WTC11 (cell line): ENCODE measurements at regions of chrX and their contacts with region 1.

Region 1: DNA sequence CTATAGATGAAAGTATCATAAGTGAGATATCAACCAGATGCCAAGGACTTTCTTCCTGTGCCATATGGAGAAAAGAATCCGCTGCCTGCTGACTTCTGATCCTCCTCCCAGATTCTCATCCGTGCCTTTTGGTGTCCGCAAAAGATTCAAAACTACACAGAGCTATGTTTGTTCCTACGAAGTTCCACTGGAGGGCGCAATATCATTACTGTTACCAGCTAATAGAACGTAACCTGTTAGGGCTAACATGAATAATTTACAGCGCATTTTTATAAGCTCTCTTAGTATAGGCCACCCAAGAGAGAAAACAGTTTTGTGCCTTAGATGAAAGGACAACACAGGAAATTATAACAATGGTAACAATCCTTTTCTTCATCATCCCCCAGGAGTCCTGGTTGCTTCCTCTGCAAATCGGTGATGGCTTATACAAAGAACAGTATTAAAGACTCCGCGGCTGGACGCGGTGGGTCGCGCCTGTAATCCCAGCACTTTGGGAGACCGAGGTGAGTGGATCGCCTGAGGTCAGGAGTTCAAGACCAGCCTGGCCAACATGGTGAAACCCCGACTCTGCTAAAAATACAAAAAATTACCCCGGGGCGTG is 22.8 kb upstream of the CENPVL3 start:
- DNase-seq: peak; percentile 12
- ATAC-seq: peak; percentile 74
- H3K4me3 Mint-ChIP-seq: no peak overlapping the region
- H3K27ac Mint-ChIP-seq: no peak overlapping the region
- H3K4me1 Mint-ChIP-seq: no peaks in the 10 kb centered on the region
- H3K27me3 Mint-ChIP-seq: peaks cover 7% of the 10 kb centered on the region; the same call in 1 of the 2 replicates
- CTCF ChIP-seq: peak; percentile 34; the same call in 1 of the 2 replicates

Region 2: GRCh38 chrX:51272638-51273037 is 368.9 kb before region 1 on chrX:
- CTCF ChIA-PET with region 1: no interaction called
- POLR2A ChIA-PET with region 1: no interaction called
- DNase-seq: no peak
- ATAC-seq: no peak
- H3K4me3 Mint-ChIP-seq: no peak overlapping the region
- H3K27ac Mint-ChIP-seq: no peak overlapping the region
- H3K4me1 Mint-ChIP-seq: no peaks in the 10 kb centered on the region
- H3K27me3 Mint-ChIP-seq: no peaks in the 10 kb centered on the region
- CTCF ChIP-seq: no peak

Region 3: DNA sequence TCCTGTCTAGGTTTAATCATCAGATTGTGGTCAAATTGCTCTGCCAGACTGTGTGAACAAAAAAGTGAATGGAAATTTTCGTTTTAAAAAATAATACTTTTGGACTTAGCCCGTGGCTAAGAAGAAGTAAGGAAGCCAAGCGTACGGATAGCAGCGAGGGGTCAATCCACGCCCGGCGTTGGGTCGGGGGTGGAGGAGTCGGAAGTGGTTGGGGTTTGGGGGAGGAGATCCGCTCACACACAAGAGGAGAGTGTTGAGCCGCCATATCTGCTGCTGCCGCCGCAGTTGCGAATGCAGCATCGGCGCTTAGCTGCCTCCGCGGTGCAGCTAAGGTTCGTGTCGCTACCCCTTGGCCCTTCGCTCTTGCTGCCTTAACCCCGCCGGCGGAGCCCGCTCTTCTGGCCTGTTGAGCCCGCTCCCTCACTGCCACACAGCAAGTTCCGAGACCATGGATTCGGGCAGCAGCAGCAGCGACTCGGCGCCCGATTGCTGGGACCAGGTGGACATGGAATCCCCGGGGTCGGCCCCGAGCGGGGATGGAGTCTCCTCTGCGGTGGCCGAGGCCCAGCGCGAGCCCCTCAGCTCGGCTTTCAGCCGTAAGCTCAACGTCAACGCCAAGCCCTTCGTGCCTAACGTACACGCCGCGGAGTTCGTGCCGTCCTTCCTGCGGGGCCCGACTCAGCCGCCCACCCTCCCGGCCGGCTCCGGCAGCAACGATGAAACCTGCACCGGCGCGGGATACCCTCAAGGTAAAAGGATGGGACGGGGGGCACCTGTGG is 101.8 kb after region 1 on chrX and contains the start of gene GSPT2:
- CTCF ChIA-PET with region 1: no interaction called
- POLR2A ChIA-PET with region 1: no interaction called
- DNase-seq: peak; percentile 43
- ATAC-seq: peak; percentile 78
- H3K4me3 Mint-ChIP-seq: peak within 1 kb of the TSS; percentile 97
- H3K27ac Mint-ChIP-seq: peak within 1 kb of the TSS; percentile 88
- H3K4me1 Mint-ChIP-seq: peaks cover 37% of the 10 kb centered on the region
- H3K27me3 Mint-ChIP-seq: no peaks in the 10 kb centered on the region
- CTCF ChIP-seq: no peak
- total RNA-seq, gene GSPT2: 25.9 to 32.1 TPM (median 31.4 TPM) in 3 replicates

Region 4: DNA sequence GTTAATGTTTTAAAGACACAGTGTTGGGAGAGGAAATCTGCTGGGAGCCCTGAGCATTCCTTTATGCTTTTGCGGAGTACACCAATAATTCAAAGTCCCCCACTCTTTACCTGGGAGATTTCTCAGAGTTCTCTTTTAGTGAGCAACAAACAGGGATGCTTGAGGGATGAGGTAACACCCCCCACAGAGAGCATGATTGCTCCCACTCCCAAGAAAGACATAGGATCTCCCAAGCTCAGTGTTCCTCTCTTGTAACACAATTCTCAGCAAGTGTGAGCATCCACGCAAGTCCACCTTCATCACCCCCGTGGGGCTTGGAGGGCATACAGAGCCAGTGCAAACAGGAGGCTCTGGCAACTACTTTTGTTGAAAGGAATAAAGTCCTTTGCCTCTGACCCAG is 137.8 kb after region 1 on chrX:
- CTCF ChIA-PET with region 1: no interaction called
- POLR2A ChIA-PET with region 1: no interaction called
- DNase-seq: no peak
- ATAC-seq: no peak
- H3K4me3 Mint-ChIP-seq: no peak overlapping the region
- H3K27ac Mint-ChIP-seq: no peak overlapping the region
- H3K4me1 Mint-ChIP-seq: peaks cover 36% of the 10 kb centered on the region
- H3K27me3 Mint-ChIP-seq: no peaks in the 10 kb centered on the region
- CTCF ChIP-seq: no peak

Region 5: DNA sequence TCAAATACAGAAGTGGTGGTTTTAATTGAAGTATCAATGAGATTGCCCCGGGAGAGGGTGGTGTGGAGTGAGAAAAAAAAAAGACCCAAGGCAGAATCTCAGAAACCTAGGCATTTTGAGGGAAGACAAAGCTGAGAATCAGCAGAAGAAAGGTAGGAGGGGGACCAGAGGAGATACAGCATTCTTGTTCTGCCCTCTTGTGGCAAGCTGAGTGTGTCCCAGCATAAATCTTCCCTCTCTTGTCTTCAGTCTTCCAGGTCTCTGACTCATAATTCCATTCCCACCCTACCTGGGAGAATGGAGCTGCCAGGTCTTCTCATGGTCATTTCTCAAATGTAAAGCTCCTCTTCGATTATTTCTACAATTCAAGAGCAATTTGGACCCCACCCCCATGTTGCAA is 219.2 kb after region 1 on chrX:
- CTCF ChIA-PET with region 1: interaction called, 49 read pairs
- POLR2A ChIA-PET with region 1: no interaction called
- DNase-seq: peak; percentile 13
- ATAC-seq: peak; percentile 79
- H3K4me3 Mint-ChIP-seq: no peak overlapping the region
- H3K27ac Mint-ChIP-seq: peak overlapping the region; percentile 80
- H3K4me1 Mint-ChIP-seq: peaks cover 18% of the 10 kb centered on the region
- H3K27me3 Mint-ChIP-seq: no peaks in the 10 kb centered on the region
- CTCF ChIP-seq: peak; percentile 20; the same call in 1 of the 2 replicates

Region 6: GRCh38 chrX:51892921-51893745 is 251.6 kb after region 1 on chrX and contains the start of gene MAGED1:
- CTCF ChIA-PET with region 1: interaction called, 10 read pairs
- POLR2A ChIA-PET with region 1: no interaction called
- DNase-seq: peak; percentile 93
- ATAC-seq: peak; percentile 95
- H3K4me3 Mint-ChIP-seq: peak within 1 kb of the TSS; percentile 95
- H3K27ac Mint-ChIP-seq: peak within 1 kb of the TSS; percentile 95
- H3K4me1 Mint-ChIP-seq: peaks cover 11% of the 10 kb centered on the region
- H3K27me3 Mint-ChIP-seq: no peaks in the 10 kb centered on the region
- CTCF ChIP-seq: no peak
- total RNA-seq, gene MAGED1: 125 to 135 TPM (median 130 TPM) in 3 replicates